Dendritic cell treated with granulocyte-macrophage colony-stimulating factor and Interleukin-4, amounts not matched to agents 40 ng/mL and 50 ng/mL, for 4 days (primary cell): ENCODE measurements at regions of chr2 and their contacts with region 1.

Region 1: GRCh38 chr2:205885492-205886099 is 200.4 kb downstream of the INO80D start:
- H3K4me3 Mint-ChIP-seq: no peak overlapping the region
- H3K27ac Mint-ChIP-seq: no peak overlapping the region
- H3K4me1 Mint-ChIP-seq: no peaks in the 10 kb centered on the region
- H3K27me3 Mint-ChIP-seq: peaks cover 8% of the 10 kb centered on the region

Region 2: GRCh38 chr2:205776139-205776538 is 109.5 kb before region 1 on chr2:
- intact Hi-C with region 1: loop called (anchors 2 kb)
- H3K4me3 Mint-ChIP-seq: no peak overlapping the region
- H3K27ac Mint-ChIP-seq: no peak overlapping the region
- H3K4me1 Mint-ChIP-seq: no peaks in the 10 kb centered on the region
- H3K27me3 Mint-ChIP-seq: peaks cover 9% of the 10 kb centered on the region